Activated CD8-positive, alpha-beta memory T cell treated with anti-CD3 and anti-CD28 coated beads, Interleukin-2, amount 10 ng/mL, durations not matched to agents 7 days and 5 days (primary cell): ENCODE measurements at regions of chr6 and their contacts with region 1.

Region 1: GRCh38 chr6:113909234-113909856 is 52.2 kb downstream of the MARCKS start:
- DNase-seq: no peak
- ATAC-seq: no peak
- H3K4me3 Mint-ChIP-seq: no peak overlapping the region
- H3K27ac Mint-ChIP-seq: no peak overlapping the region
- H3K4me1 Mint-ChIP-seq: no peaks in the 10 kb centered on the region
- H3K27me3 Mint-ChIP-seq: peaks cover 9% of the 10 kb centered on the region

Region 2: GRCh38 chr6:113805173-113805790 is 104.1 kb before region 1 on chr6:
- CTCF ChIA-PET with region 1: no interaction called
- DNase-seq: no peak
- ATAC-seq: no peak
- H3K4me3 Mint-ChIP-seq: no peak overlapping the region
- H3K27ac Mint-ChIP-seq: no peak overlapping the region
- H3K4me1 Mint-ChIP-seq: peaks cover 5% of the 10 kb centered on the region
- H3K27me3 Mint-ChIP-seq: peaks cover 9% of the 10 kb centered on the region

Region 3: GRCh38 chr6:113920663-113921267 is 11.4 kb after region 1 on chr6:
- CTCF ChIA-PET with region 1: interaction called, 21 read pairs
- DNase-seq: peak; percentile 66
- ATAC-seq: peak; percentile 82
- H3K4me3 Mint-ChIP-seq: no peak overlapping the region
- H3K27ac Mint-ChIP-seq: peak overlapping the region; percentile 61
- H3K4me1 Mint-ChIP-seq: peaks cover 14% of the 10 kb centered on the region
- H3K27me3 Mint-ChIP-seq: peaks cover 3% of the 10 kb centered on the region

Region 4: GRCh38 chr6:113970805-113971676 is 61.7 kb after region 1 on chr6 and contains the start of gene HDAC2:
- CTCF ChIA-PET with region 1: no interaction called
- DNase-seq: peak; percentile 89
- ATAC-seq: peak; percentile 78
- H3K4me3 Mint-ChIP-seq: peak within 1 kb of the TSS; percentile 96
- H3K27ac Mint-ChIP-seq: peak within 1 kb of the TSS; percentile 99
- H3K4me1 Mint-ChIP-seq: peaks cover 29% of the 10 kb centered on the region
- H3K27me3 Mint-ChIP-seq: no peaks in the 10 kb centered on the region
- total RNA-seq, gene HDAC2: 62.4 to 75.5 TPM